Heart right ventricle (tissue), 16 donors: ENCODE measurements at regions of chr17 and their contacts with region 1.

Region 1: DNA sequence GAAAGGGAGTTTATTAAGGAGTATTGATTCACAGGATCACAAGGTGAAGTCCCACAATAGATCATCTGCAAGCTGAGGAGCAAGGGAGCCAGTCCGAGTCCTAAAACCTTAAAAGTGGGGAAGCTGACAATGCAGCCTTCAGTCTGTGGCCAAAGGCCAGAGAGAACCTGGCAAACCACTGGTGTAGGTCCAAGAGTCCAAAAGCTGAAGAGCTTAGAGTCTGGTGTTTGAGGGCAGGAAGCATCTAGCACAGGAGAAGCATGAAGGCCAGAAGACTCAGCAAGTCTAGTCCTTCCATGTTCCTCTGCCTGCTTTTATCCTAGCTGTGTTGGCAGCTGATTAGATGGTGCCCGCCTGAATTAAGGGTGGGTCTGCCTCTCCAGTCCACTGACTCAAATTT is 193.0 kb downstream of the KIF2B start:
- DNase-seq: no peak
- ATAC-seq: no peak
- H3K4me3 ChIP-seq: no peak overlapping the region
- H3K27ac ChIP-seq: no peak overlapping the region
- H3K4me1 ChIP-seq: no peaks in the 10 kb centered on the region
- H3K27me3 ChIP-seq: no peaks in the 10 kb centered on the region
- CTCF ChIP-seq: no peak

Region 2: GRCh38 chr17:54063639-54064038 is 47.9 kb after region 1 on chr17:
- intact Hi-C with region 1: loop called in 1 of 10 experiments (anchors 5 kb)
- DNase-seq: no peak
- ATAC-seq: no peak
- H3K4me3 ChIP-seq: no peak overlapping the region
- H3K27ac ChIP-seq: no peak overlapping the region
- H3K4me1 ChIP-seq: no peaks in the 10 kb centered on the region
- H3K27me3 ChIP-seq: no peaks in the 10 kb centered on the region
- CTCF ChIP-seq: no peak

Region 3: GRCh38 chr17:54269881-54270280 is 254.1 kb after region 1 on chr17:
- intact Hi-C with region 1: no loop called
- DNase-seq: no peak
- ATAC-seq: no peak
- H3K4me3 ChIP-seq: no peak overlapping the region
- H3K27ac ChIP-seq: no peak overlapping the region
- H3K4me1 ChIP-seq: no peaks in the 10 kb centered on the region
- H3K27me3 ChIP-seq: no peaks in the 10 kb centered on the region
- CTCF ChIP-seq: no peak